GM12878 (cell line): ENCODE measurements at regions of chr1 and their contacts with region 1.

Region 1: GRCh38 chr1:151909150-151910149 is at the start of gene THEM4:
- DNase-seq: peak; percentile 79
- ATAC-seq: peak; percentile 99
- H3K4me3 ChIP-seq: peak within 1 kb of the TSS; percentile 84
- H3K27ac ChIP-seq: peak within 1 kb of the TSS; percentile 78
- H3K4me1 ChIP-seq: no peaks in the 10 kb centered on the region
- H3K27me3 ChIP-seq: no peaks in the 10 kb centered on the region
- CTCF ChIP-seq: peak; percentile 24 to 36 (median 33); a peak in 4 of 6 replicates
- EP300 ChIP-seq: no peak
- POLR2A ChIP-seq: peak; percentile 93
- RAD21 ChIP-seq: peak; percentile 37; the same call in 1 of the 2 replicates
- polyA plus RNA-seq, gene THEM4: 3.4 to 7.2 TPM

Region 2: GRCh38 chr1:151815716-151816327 is 93.6 kb before region 1 on chr1:
- CTCF ChIA-PET with region 1: no interaction called
- POLR2A ChIA-PET with region 1: no interaction called
- RAD21 ChIA-PET with region 1: no interaction called
- SMC1A ChIA-PET with region 1: no interaction called
- in situ Hi-C with region 1: no loop called
- intact Hi-C with region 1: no loop called
- DNase-seq: no peak
- ATAC-seq: no peak
- H3K4me3 ChIP-seq: no peak overlapping the region
- H3K27ac ChIP-seq: no peak overlapping the region
- H3K4me1 ChIP-seq: no peaks in the 10 kb centered on the region; the same call in 1 of the 2 replicates
- H3K27me3 ChIP-seq: peaks cover 0 to 4% of the 10 kb centered on the region in 2 experiments; a peak in 2 of 4 replicates
- CTCF ChIP-seq: no peak
- EP300 ChIP-seq: no peak
- POLR2A ChIP-seq: no peak
- RAD21 ChIP-seq: no peak

Region 3: GRCh38 chr1:151898513-151898991 is 10.9 kb before region 1 on chr1:
- CTCF ChIA-PET with region 1: interaction called, 16 read pairs
- POLR2A ChIA-PET with region 1: no interaction called
- RAD21 ChIA-PET with region 1: no interaction called
- SMC1A ChIA-PET with region 1: no interaction called
- in situ Hi-C with region 1: no loop called
- intact Hi-C with region 1: no loop called
- DNase-seq: no peak
- ATAC-seq: no peak
- H3K4me3 ChIP-seq: no peak overlapping the region
- H3K27ac ChIP-seq: no peak overlapping the region
- H3K4me1 ChIP-seq: no peaks in the 10 kb centered on the region
- H3K27me3 ChIP-seq: no peaks in the 10 kb centered on the region
- CTCF ChIP-seq: no peak
- EP300 ChIP-seq: no peak
- POLR2A ChIP-seq: no peak
- RAD21 ChIP-seq: no peak

Region 4: DNA sequence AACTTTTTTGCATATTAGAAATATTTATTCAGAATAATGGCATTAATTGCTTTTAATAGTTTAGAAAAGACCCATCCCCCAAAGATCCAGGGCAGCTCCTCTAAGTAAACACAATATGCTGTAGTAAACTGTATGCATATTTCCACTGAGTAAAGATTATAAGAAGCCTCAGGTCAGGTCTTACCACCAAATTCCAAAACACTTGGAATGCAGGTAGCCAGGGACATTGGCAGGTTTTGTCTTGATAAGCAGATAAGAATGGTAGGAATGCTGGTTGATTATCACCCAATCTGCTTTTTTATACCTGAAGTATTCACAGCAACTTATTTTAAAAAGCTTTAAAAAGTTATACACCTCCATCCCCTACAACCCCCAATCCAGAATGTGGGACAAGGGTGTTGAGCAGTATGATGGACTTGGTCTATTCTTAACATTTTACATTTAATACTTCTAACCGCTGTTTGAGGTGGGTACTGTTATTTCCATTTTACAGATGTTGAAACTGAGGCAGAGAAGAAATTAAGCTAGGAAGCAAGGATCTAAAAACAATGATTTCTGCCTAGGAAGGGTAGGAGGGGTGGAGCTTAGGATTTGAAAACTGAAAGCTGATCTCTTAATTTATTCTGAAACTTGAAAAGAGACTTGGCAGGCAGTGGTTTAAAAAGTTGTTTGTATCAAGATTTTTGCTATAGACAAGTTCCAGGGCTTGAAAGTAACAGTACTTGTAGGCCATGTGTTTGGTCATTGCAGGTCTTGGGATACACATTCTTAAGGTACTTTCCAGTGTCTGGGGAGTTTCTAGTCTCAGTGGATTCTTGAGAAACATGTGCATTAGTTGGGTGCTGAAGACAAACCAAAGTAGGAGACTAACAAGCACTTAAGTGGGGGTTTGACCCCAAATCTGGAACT is 15.5 kb after region 1 on chr1:
- CTCF ChIA-PET with region 1: interaction called, 14 read pairs
- POLR2A ChIA-PET with region 1: interaction called, 11 read pairs
- RAD21 ChIA-PET with region 1: interaction called, 6 read pairs
- SMC1A ChIA-PET with region 1: interaction called, 6 read pairs
- in situ Hi-C with region 1: no loop called
- intact Hi-C with region 1: no loop called
- DNase-seq: peak; percentile 40
- ATAC-seq: peak; percentile 81
- H3K4me3 ChIP-seq: no peak overlapping the region
- H3K27ac ChIP-seq: peak overlapping the region; percentile 71
- H3K4me1 ChIP-seq: peaks cover 45% of the 10 kb centered on the region
- H3K27me3 ChIP-seq: no peaks in the 10 kb centered on the region
- CTCF ChIP-seq: no peak
- EP300 ChIP-seq: 0 out of 4 replicates have a peak, but pooled peaks of 1 of the 2 experiments have one; percentile 44
- POLR2A ChIP-seq: no peak
- RAD21 ChIP-seq: no peak